Naive thymus-derived CD8-positive, alpha-beta T cell (primary cell): ENCODE measurements at regions of chr2 and their contacts with region 1.

Region 1: GRCh38 chr2:127707890-127708648 is 6.8 kb downstream of the SFT2D3 start:
- DNase-seq: no peak
- ATAC-seq: no peak
- H3K4me3 Mint-ChIP-seq: no peak overlapping the region
- H3K27ac Mint-ChIP-seq: peak overlapping the region in 4 of 10 donors; percentile 37 to 72 (median 52)
- H3K4me1 Mint-ChIP-seq: peaks cover 10 to 28% (median 22%) of the 10 kb centered on the region in 4 donors
- H3K27me3 Mint-ChIP-seq: no peaks in the 10 kb centered on the region

Region 2: DNA sequence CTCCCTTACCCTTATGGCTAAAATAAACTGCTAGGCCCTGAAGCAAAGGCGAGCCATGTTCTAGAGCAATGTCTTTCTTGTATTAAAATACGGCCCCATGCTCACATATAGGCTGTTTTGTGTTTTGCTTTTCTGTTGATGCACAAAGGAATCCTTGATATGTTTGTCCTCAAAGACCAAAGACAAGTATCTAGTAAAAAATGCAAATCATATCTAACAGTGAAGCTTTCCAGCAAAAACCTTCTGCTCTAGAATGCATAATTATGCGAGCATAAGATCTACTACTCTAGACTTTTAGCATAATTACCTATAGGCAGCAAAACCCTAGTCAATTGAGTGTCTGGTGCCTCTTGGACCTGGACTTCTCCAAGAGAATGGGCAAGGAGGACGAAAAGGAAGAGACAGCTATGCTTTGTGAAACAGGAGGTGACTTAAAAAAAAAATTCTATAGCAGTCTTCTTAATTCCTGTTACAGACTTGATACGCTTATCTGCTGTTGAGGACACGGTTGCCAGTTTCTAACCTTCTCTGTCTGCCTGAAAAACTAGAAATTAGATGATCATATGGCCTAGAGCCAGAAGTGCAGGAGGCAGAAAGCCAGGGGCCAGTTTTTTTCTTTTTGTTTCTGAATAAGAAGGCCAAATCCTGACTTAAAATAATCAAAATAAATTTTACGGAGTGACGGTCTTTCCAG is 179.2 kb after region 1 on chr2:
- POLR2A ChIA-PET with region 1: interaction called, 12 read pairs
- DNase-seq: peak in 1 of 10 donors; percentile 8
- ATAC-seq: no peak
- H3K4me3 Mint-ChIP-seq: peak overlapping the region; percentile 75 to 89 (median 86)
- H3K27ac Mint-ChIP-seq: peak overlapping the region; percentile 25 to 93 (median 86)
- H3K4me1 Mint-ChIP-seq: peaks cover 34 to 53% (median 48%) of the 10 kb centered on the region in 4 donors
- H3K27me3 Mint-ChIP-seq: no peaks in the 10 kb centered on the region